Head of caudate nucleus (tissue), 42 donors: ENCODE measurements at regions of chr3 and their contacts with region 1.

Region 1: DNA sequence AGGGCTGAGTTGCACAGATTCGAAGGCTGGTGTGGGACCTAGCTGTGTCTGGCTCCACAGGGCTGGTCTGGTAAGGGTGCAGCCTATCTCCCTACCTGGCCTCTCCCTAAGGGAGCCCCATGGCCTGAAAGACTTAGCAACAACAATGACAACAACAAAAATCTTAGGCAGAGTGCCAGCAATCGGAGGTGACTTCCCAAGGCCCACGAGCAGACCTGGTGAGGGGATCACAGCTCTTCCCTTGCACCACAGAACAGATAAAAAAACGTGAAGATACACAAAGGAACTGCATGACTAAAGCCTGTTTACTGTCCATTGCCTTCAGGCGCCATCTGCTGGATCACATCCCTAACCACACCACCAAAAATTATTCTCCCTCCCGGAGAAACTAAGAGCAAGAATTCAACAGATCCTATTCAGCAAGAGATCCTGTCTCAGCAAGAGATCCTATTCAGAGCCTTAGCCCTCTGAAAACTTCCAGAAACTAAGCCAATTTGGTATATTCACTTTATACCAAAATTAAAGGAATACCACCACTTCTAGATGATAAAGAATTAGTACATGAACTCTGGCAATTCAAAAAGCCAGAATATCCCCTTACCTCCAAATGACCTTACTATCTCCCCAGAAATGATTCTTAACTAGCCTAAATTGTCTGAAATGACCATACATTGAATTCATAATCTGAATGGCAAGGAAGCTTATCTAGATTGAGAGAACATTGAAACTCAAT is 24.1 kb upstream of the OR5K4 start:
- DNase-seq: peak in 41 of 42 donors; percentile 11 to 86 (median 65)

Region 2: DNA sequence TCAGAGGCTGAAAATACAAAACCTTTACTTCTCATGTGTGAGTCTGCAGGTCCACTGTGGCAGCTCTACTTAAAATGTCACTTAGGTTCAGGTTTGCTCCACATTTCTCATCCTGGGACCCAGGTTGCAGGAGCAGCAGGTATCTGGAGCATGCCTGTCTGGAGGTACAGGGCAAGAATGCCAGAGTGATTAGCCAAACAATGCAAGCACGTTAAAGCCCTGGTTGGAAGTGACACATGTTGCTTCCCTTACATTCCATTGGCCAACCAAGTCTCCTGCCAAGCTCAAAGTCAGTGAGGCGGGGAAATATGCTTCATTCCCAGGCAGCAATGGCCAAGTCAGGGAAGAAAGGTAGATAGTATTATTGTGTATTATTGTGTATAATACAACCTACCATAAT is 641.8 kb before region 1 on chr3:
- intact Hi-C with region 1: no loop called
- DNase-seq: no peak

Region 3: GRCh38 chr3:98039322-98040024 is 290.1 kb before region 1 on chr3:
- intact Hi-C with region 1: loop called (anchors 1 kb)
- DNase-seq: peak; percentile 4 to 87 (median 68)

Region 4: GRCh38 chr3:98188545-98188944 is 141.0 kb before region 1 on chr3:
- intact Hi-C with region 1: loop called (anchors 5 kb)
- DNase-seq: peak in 1 of 42 donors; percentile 1

Region 5: GRCh38 chr3:98259707-98260106 is 69.9 kb before region 1 on chr3:
- intact Hi-C with region 1: no loop called
- DNase-seq: no peak

Region 6: GRCh38 chr3:98483130-98483482 is 153.5 kb after region 1 on chr3:
- intact Hi-C with region 1: no loop called
- DNase-seq: no peak